Heart left ventricle (tissue), 16 donors: ENCODE measurements at regions of chr17 and their contacts with region 1.

Region 1: GRCh38 chr17:18093616-18094408 is 6.1 kb downstream of the DRG2 start:
- DNase-seq: peak in 4 of 5 donors; percentile 41 to 81 (median 60)
- ATAC-seq: peak; percentile 55 to 83 (median 63)
- H3K4me3 ChIP-seq: no peak overlapping the region
- H3K27ac ChIP-seq: no peak overlapping the region
- H3K4me1 ChIP-seq: peaks cover 0 to 9% (median 3%) of the 10 kb centered on the region in 12 donors
- H3K27me3 ChIP-seq: no peaks in the 10 kb centered on the region
- CTCF ChIP-seq: peak in 6 of 12 donors; percentile 14 to 51 (median 34)
- POLR2A ChIP-seq: no peak

Region 2: GRCh38 chr17:17950806-17951205 is 143.0 kb before region 1 on chr17:
- intact Hi-C with region 1: no loop called
- DNase-seq: no peak
- ATAC-seq: no peak
- H3K4me3 ChIP-seq: no peak overlapping the region
- H3K27ac ChIP-seq: no peak overlapping the region
- H3K4me1 ChIP-seq: peaks cover 0 to 45% (median 8%) of the 10 kb centered on the region in 12 donors
- H3K27me3 ChIP-seq: no peaks in the 10 kb centered on the region
- CTCF ChIP-seq: no peak
- POLR2A ChIP-seq: no peak

Region 3: DNA sequence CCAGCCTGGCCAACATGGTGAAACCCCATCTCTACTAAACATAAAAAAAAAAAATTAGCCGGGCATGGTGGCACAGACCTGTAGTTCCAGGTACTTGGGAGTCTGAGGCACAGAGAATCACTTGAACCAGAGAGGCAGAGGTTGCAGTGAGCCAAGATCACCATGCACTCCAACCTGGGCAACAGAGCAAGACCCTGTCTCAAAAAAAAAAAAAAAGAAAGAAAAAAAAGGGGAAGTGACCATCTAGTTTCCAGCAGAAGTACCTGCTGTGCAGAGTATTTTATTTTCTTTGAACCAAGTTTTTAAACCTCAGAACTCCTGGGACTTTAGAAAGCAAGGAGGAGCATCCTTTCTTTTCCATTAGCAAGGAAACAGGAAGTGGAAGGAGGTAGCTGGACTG is 48.1 kb before region 1 on chr17:
- intact Hi-C with region 1: no loop called
- DNase-seq: no peak
- ATAC-seq: no peak
- H3K4me3 ChIP-seq: no peak overlapping the region
- H3K27ac ChIP-seq: no peak overlapping the region
- H3K4me1 ChIP-seq: peaks cover 0 to 32% (median 12%) of the 10 kb centered on the region in 12 donors
- H3K27me3 ChIP-seq: no peaks in the 10 kb centered on the region
- CTCF ChIP-seq: no peak
- POLR2A ChIP-seq: no peak

Region 4: GRCh38 chr17:18176176-18176575 is 82.4 kb after region 1 on chr17:
- intact Hi-C with region 1: loop called in 1 of 10 experiments (anchors 10 kb)
- DNase-seq: peak in 1 of 5 donors; percentile 46
- ATAC-seq: no peak
- H3K4me3 ChIP-seq: no peak overlapping the region
- H3K27ac ChIP-seq: no peak overlapping the region
- H3K4me1 ChIP-seq: peaks cover 0 to 7% (median 0%) of the 10 kb centered on the region in 12 donors
- H3K27me3 ChIP-seq: no peaks in the 10 kb centered on the region
- CTCF ChIP-seq: no peak
- POLR2A ChIP-seq: no peak